ENCODE measurements at regions of chr4 and their contacts with region 1.

Region 1: DNA sequence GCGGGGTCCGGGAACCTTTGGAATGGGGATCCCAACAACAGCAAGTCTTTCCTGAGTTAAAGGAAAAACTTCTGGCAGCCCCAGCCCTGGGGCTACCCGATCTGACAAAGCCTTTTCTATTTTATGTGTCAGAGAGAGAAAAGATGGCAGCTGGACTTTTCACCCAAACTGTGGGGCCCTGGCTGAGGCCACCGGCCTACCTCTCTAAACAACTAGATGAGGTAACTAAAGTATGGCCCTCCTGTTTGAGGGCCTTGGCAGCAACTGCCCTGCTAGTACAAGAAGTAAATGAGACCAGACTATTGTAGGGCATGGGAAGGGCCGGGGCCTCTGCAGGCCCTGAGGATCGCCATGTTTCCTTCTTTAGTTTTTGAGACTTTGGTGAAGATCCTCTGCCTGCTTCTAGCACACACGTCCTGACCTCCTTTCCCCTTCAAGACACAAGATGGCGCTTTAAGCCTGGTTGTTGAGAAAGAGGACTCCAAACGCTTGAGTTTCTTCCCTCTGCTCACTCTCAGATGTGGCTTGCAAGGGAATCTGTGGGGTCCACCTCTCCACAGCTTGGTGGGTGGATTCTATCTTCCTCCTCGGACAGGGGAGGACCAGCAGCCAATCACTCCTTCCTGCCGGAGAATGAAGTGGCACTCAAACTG is 18.5 kb upstream of the DRD5 start:
- DNase-seq: peak; percentile 67
- H3K4me3 ChIP-seq: no peak overlapping the region
- H3K27ac ChIP-seq: no peak overlapping the region
- H3K4me1 ChIP-seq: no peaks in the 10 kb centered on the region
- H3K27me3 ChIP-seq: no peaks in the 10 kb centered on the region
- CTCF ChIP-seq: peak; percentile 20 to 81 (median 70)
- POLR2A ChIP-seq: no peak

Region 2: DNA sequence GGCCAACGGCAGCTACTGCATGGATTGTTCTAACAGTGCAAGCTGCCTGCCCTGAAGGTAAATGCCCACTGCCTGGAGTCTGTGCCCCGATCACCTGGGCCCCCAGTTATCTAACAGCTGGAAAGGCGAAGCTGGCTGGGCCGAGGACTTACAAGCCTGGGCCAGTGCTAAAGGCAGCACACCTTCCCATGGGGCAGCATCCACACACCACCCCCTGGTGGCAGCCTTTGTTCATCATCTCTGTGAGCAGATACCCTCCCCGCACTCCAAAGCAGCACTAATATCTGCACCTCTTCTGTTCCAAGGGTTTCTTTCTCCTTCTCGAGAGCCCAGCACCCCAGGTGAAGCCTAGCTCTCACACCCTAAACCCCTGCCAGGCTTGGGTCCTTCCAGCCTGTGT is 250.8 kb after region 1 on chr4:
- intact Hi-C with region 1: loop called (anchors 2 kb)
- DNase-seq: peak; percentile 56
- H3K4me3 ChIP-seq: no peak overlapping the region
- H3K27ac ChIP-seq: no peak overlapping the region
- H3K4me1 ChIP-seq: no peaks in the 10 kb centered on the region
- H3K27me3 ChIP-seq: no peaks in the 10 kb centered on the region
- CTCF ChIP-seq: peak in 2 of 4 experiments; percentile 55 to 65
- POLR2A ChIP-seq: no peak

Region 3: GRCh38 chr4:10063544-10064300 is 300.8 kb after region 1 on chr4:
- intact Hi-C with region 1: loop called (anchors 2 kb)
- DNase-seq: peak; percentile 88
- H3K4me3 ChIP-seq: no peak overlapping the region
- H3K27ac ChIP-seq: peak overlapping the region; percentile 44 to 52
- H3K4me1 ChIP-seq: no peaks in the 10 kb centered on the region
- H3K27me3 ChIP-seq: no peaks in the 10 kb centered on the region
- CTCF ChIP-seq: peak; percentile 46 to 92 (median 74)
- POLR2A ChIP-seq: no peak

Region 4: DNA sequence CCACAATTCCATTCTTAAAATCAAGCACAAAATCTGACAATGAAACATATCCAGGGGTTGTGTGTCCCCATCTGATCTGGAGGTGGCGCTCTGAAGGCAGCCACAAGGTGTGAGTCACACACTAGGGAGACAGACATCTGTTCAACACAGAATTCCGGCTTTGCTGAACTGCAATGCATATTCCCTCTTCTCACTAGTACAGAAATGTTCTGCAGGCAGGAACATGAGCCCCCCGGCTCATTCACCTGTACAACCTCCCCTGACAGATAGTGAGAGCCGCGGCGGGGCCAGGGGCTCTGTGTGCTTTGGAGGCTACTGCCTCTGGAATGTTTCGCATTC is 311.8 kb after region 1 on chr4:
- intact Hi-C with region 1: no loop called
- DNase-seq: no peak
- H3K4me3 ChIP-seq: no peak overlapping the region
- H3K27ac ChIP-seq: no peak overlapping the region
- H3K4me1 ChIP-seq: no peaks in the 10 kb centered on the region
- H3K27me3 ChIP-seq: no peaks in the 10 kb centered on the region
- CTCF ChIP-seq: peak in 1 of 4 experiments; percentile 14
- POLR2A ChIP-seq: no peak

Region 5: DNA sequence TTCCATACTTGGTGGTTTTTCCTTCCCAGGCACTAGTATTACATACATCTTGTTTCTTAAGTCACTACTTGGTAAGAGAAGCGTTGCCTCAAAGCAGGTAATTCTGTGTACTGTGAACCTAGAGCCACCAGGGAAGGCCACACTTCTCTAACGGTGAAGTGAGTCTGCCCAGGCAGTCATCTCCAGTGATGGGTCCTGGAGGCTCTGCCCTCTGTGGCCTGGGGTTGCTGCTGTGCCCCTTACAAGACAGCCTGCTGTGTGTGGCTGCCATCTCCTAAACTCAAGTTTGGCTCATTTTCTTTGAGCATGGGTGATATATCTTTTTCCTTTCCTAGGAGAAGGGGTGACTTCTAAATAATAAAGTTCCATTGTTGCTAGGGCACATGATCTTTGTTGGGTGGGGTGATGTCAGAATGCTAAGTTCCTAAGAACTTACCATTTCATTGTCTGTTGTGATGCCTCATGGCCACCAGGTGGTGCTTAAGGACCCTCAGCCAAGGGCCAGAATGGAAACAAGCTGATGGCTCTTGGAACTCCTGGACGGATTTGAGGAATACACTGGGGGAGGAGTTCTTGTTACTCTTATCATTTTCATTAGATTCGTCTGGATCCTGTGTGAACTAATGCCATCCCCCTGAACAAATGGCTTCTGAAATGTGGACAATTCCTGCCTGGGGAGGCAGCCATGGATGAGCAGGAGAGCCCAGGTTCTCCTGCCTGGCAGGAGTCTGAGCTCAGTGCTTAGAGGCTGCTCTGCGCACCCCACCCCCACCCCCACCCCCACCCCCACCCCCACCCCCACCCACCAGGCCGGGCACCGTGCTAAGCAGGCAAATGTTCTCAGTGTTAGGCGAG is 394.8 kb after region 1 on chr4:
- intact Hi-C with region 1: loop called (anchors 10 kb)
- DNase-seq: peak; percentile 64
- H3K4me3 ChIP-seq: no peak overlapping the region
- H3K27ac ChIP-seq: peak overlapping the region in 1 of 2 donors; percentile 24
- H3K4me1 ChIP-seq: no peaks in the 10 kb centered on the region
- H3K27me3 ChIP-seq: no peaks in the 10 kb centered on the region
- CTCF ChIP-seq: peak; percentile 38 to 89 (median 82)
- POLR2A ChIP-seq: no peak

Region 6: GRCh38 chr4:10311939-10312338 is 549.0 kb after region 1 on chr4:
- intact Hi-C with region 1: no loop called
- DNase-seq: no peak
- H3K4me3 ChIP-seq: no peak overlapping the region
- H3K27ac ChIP-seq: no peak overlapping the region
- H3K4me1 ChIP-seq: no peaks in the 10 kb centered on the region
- H3K27me3 ChIP-seq: no peaks in the 10 kb centered on the region
- CTCF ChIP-seq: no peak
- POLR2A ChIP-seq: no peak

Measured in prostate gland (tissue), 2 donors.